ENCODE measurements at regions of chr10 and their contacts with region 1.

Region 1: DNA sequence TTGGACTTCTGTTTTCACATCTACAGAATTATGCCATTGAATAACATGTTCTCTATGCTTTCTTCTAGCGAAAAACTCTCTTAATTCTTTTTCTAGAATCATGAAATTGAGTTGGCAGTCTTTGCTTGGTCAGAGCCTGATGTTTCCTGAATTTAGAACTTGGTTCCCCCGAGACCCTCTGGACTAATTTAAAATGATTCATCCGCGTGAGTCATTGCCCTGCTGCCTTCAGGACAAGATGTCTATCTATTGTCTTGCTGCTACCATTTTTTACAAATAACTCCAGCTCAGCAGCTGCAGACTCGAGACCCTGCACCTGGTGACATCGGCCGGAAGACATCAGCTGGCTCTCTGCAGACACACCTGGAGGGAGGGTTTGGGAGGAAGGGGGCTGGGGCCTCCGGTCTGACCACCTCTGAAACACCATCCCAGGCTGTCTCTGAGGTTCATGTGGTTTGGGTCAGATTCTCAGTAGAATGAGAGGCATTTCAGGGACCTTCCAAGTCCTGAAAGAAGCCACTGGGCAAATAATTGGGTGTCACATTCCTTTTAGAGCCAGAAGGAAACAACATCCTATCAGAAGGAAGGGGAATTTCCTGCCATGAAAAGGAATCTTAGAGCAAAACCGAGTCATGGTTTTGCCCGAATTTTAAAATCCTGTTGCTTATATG is 20.9 kb upstream of the KLF6 start:
- DNase-seq: peak in 3 of 9 donors; percentile 13 to 53 (median 31)
- ATAC-seq: no peak
- H3K4me3 ChIP-seq: peak overlapping the region; percentile 38
- H3K4me3 Mint-ChIP-seq: peak overlapping the region; percentile 14 to 86 (median 70)
- H3K27ac ChIP-seq: peak overlapping the region; percentile 82
- H3K27ac Mint-ChIP-seq: peak overlapping the region in 3 of 9 donors; percentile 97 to 99 (median 99)
- H3K4me1 ChIP-seq: peaks cover 70 to 83% of the 10 kb centered on the region in 2 donors
- H3K4me1 Mint-ChIP-seq: peaks cover 43 to 81% (median 74%) of the 10 kb centered on the region in 7 donors
- H3K27me3 ChIP-seq: no peaks in the 10 kb centered on the region
- H3K27me3 Mint-ChIP-seq: no peaks in the 10 kb centered on the region

Region 2: DNA sequence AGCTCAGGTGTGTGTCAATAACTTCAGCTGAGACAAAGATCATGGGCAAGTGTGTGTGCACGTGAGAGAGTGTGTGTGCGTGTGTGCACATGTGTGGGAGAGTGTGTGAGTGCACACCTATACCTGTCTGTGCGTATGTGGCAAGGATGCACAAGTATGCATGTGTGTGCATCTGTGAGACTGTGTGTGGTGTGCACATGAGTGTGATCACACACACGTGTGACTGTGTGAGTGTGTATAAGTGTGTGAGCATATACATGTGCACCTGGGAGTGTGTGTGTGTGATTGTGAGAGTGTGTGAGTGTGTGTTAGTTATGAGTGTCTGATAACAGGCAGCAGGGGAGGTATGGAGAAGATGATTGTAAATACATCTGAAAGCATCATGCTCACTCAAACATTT is 1395.9 kb before region 1 on chr10:
- CTCF ChIA-PET with region 1: no interaction called
- POLR2A ChIA-PET with region 1: no interaction called
- intact Hi-C with region 1: no loop called
- DNase-seq: no peak
- ATAC-seq: no peak
- H3K4me3 ChIP-seq: no peak overlapping the region
- H3K4me3 Mint-ChIP-seq: no peak overlapping the region
- H3K27ac ChIP-seq: no peak overlapping the region
- H3K27ac Mint-ChIP-seq: no peak overlapping the region
- H3K4me1 ChIP-seq: no peaks in the 10 kb centered on the region
- H3K4me1 Mint-ChIP-seq: no peaks in the 10 kb centered on the region
- H3K27me3 ChIP-seq: no peaks in the 10 kb centered on the region
- H3K27me3 Mint-ChIP-seq: peaks cover 0 to 18% (median 0%) of the 10 kb centered on the region in 5 donors

Region 3: GRCh38 chr10:3452173-3452626 is 353.7 kb before region 1 on chr10:
- CTCF ChIA-PET with region 1: no interaction called
- POLR2A ChIA-PET with region 1: no interaction called
- intact Hi-C with region 1: loop called in 1 of 2 experiments (anchors 1 kb)
- DNase-seq: peak in 6 of 9 donors; percentile 18 to 56 (median 24)
- ATAC-seq: no peak
- H3K4me3 ChIP-seq: no peak overlapping the region
- H3K4me3 Mint-ChIP-seq: peak overlapping the region in 1 of 10 donors; percentile 57
- H3K27ac ChIP-seq: peak overlapping the region; percentile 51
- H3K27ac Mint-ChIP-seq: peak overlapping the region in 8 of 9 donors; percentile 16 to 88 (median 78)
- H3K4me1 ChIP-seq: peaks cover 0 to 38% of the 10 kb centered on the region in 2 donors
- H3K4me1 Mint-ChIP-seq: peaks cover 7 to 48% (median 36%) of the 10 kb centered on the region in 7 donors
- H3K27me3 ChIP-seq: peaks cover 0 to 6% of the 10 kb centered on the region in 2 donors
- H3K27me3 Mint-ChIP-seq: peaks cover 0 to 32% (median 0%) of the 10 kb centered on the region in 5 donors

Region 4: DNA sequence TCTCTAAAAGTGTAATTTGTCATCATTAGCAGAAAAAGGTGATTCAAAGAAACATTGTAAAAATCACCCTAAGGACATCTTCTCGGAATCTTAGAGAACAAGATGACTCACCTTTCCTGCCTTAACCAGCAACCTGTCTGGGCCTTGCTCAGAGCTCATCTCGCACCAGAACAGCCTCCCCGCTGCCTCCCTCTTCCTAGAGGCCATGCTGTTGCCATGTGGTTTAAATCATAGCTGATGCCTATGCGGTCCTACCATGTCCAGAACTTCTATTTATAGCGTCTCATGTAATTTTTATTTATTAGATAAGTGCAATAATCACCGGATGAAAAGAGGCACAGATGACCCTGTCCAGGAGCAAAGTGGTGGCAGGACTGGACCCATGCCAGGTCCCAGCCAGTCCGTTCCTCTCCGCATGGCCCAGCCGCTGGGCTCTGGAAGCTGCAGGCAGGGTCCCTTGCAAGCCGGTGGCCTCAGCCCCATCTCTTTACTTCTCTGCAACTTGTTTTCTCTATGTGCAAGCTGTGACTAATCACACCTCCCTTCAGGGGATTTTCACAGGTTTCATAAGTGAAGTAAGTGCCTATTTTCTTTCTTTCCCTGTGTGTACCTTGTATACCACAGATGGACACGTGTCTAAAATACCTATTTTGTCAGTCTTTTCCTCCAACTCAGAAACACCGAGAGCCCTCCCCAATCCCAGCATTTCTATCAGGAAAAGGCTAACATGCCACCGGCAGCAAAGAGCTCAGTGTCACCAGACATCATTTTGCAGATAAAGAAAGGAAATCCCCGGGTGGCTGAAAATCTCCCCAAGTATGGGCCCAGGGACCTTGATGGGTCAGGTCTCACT is 48.1 kb before region 1 on chr10:
- CTCF ChIA-PET with region 1: no interaction called
- POLR2A ChIA-PET with region 1: no interaction called
- intact Hi-C with region 1: loop called in 1 of 2 experiments (anchors 1 kb)
- DNase-seq: peak in 1 of 9 donors; percentile 62
- ATAC-seq: peak; percentile 80
- H3K4me3 ChIP-seq: no peak overlapping the region
- H3K4me3 Mint-ChIP-seq: peak overlapping the region in 2 of 10 donors; percentile 56 to 82
- H3K27ac ChIP-seq: no peak overlapping the region
- H3K27ac Mint-ChIP-seq: peak overlapping the region in 4 of 9 donors; percentile 65 to 99 (median 83)
- H3K4me1 ChIP-seq: peaks cover 0 to 56% of the 10 kb centered on the region in 2 donors
- H3K4me1 Mint-ChIP-seq: peaks cover 5 to 79% (median 24%) of the 10 kb centered on the region in 7 donors
- H3K27me3 ChIP-seq: no peaks in the 10 kb centered on the region
- H3K27me3 Mint-ChIP-seq: no peaks in the 10 kb centered on the region

Region 5: DNA sequence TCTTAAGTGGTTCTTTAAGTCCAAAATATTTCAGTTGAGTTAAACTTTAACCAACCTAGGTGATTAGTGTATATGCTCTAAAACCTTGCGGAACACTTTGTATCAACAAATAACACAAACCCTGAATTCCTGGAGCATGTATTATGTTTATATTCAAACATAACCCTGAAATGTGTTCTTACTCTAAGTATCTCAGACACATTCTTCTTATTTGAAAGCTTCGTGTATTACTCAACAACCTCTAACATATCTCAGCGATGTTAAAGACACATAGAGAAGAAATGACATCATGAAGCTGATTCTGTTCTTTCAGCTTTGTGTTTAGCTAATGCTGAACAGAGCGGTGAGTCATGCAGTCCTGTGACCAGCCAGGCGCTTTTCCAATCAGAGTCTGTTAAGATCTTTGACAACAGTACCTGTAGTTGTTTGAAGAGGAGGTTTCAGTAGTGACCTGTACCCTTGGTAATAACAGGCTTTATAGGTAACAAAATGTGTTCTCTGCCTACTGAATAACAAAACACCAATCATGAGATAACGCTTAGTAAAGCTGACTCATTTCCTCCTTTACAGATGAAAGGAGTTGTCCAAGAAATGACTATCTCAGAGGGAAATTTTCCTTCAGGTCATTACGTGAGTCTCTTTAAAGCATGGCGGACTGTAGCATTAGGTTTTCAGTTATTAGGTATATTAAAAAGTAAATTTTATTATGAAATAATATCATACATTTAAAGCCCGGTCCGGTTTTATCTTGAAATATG is 46.4 kb after region 1 on chr10:
- CTCF ChIA-PET with region 1: no interaction called
- POLR2A ChIA-PET with region 1: no interaction called
- intact Hi-C with region 1: loop called in 1 of 2 experiments (anchors 1 kb)
- DNase-seq: peak in 2 of 9 donors; percentile 28 to 55
- ATAC-seq: peak; percentile 87
- H3K4me3 ChIP-seq: no peak overlapping the region
- H3K4me3 Mint-ChIP-seq: peak overlapping the region in 1 of 10 donors; percentile 55
- H3K27ac ChIP-seq: no peak overlapping the region
- H3K27ac Mint-ChIP-seq: peak overlapping the region in 3 of 9 donors; percentile 70 to 92 (median 80)
- H3K4me1 ChIP-seq: peaks cover 5 to 12% of the 10 kb centered on the region in 2 donors
- H3K4me1 Mint-ChIP-seq: peaks cover 0 to 35% (median 8%) of the 10 kb centered on the region in 7 donors
- H3K27me3 ChIP-seq: no peaks in the 10 kb centered on the region
- H3K27me3 Mint-ChIP-seq: no peaks in the 10 kb centered on the region

Region 6: DNA sequence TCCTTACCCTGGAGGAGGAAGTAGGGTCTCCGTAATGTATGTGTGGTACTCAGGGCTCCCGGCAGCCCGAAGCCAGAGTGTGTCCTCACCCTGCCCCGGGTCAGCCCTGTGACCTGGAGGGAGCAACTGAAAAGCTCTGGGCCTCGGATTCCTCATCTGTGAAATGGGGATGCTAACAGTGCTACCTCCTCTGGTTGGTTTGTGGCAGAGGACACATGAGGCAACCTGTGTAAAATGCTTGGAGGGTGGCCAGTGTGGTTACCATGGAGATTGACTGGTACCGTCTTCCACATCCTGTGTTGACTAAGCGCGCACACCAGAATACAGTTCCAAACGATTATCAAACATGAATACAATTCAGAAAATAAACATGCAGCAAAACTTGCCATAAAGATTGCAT is 142.9 kb after region 1 on chr10:
- CTCF ChIA-PET with region 1: no interaction called
- POLR2A ChIA-PET with region 1: interaction called, 3 read pairs
- intact Hi-C with region 1: loop called (anchors 1 kb)
- DNase-seq: peak; percentile 21 to 79 (median 61)
- ATAC-seq: peak; percentile 94
- H3K4me3 ChIP-seq: no peak overlapping the region
- H3K4me3 Mint-ChIP-seq: peak overlapping the region in 9 of 10 donors; percentile 16 to 67 (median 47)
- H3K27ac ChIP-seq: no peak overlapping the region
- H3K27ac Mint-ChIP-seq: peak overlapping the region; percentile 32 to 97 (median 78)
- H3K4me1 ChIP-seq: peaks cover 20 to 59% of the 10 kb centered on the region in 2 donors
- H3K4me1 Mint-ChIP-seq: peaks cover 14 to 60% (median 36%) of the 10 kb centered on the region in 7 donors
- H3K27me3 ChIP-seq: no peaks in the 10 kb centered on the region
- H3K27me3 Mint-ChIP-seq: no peaks in the 10 kb centered on the region

Region 7: DNA sequence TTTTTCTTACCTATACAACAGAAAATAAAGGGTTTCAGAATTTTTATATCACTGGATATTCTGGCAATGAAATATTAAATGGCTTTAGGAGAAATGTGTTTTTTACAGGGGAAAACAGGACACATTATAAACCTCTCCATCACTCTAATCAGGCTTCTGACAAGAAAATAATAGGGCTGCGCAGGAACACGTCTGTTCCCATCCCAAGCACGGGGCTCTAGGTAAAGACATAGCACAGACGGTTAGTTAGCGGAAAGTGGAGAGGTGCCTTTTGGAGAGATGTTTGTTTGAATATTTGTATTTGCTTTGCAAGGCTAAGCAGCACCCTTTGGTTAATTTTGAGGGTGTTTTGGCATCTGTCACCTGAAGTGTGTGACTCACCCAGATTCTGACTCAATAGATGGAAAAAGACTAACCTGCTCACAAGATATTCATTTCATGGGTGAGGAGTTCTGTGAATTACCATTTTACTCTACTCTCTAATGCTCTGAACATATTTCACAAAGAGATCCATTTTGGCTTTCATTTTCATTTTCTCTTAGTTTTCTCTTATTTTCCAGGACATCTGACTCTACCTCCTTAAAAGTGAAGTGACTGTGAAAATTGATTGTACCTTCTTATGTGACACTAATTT is 845.6 kb after region 1 on chr10:
- CTCF ChIA-PET with region 1: no interaction called
- POLR2A ChIA-PET with region 1: no interaction called
- intact Hi-C with region 1: loop called in 1 of 2 experiments (anchors 2 kb)
- DNase-seq: peak in 1 of 9 donors; percentile 23
- ATAC-seq: no peak
- H3K4me3 ChIP-seq: no peak overlapping the region
- H3K4me3 Mint-ChIP-seq: peak overlapping the region in 1 of 10 donors; percentile 35
- H3K27ac ChIP-seq: no peak overlapping the region
- H3K27ac Mint-ChIP-seq: peak overlapping the region in 1 of 9 donors; percentile 76
- H3K4me1 ChIP-seq: no peaks in the 10 kb centered on the region
- H3K4me1 Mint-ChIP-seq: peaks cover 0 to 29% (median 0%) of the 10 kb centered on the region in 7 donors
- H3K27me3 ChIP-seq: no peaks in the 10 kb centered on the region
- H3K27me3 Mint-ChIP-seq: peaks cover 0 to 3% (median 2%) of the 10 kb centered on the region in 5 donors

Measured in naive thymus-derived CD4-positive, alpha-beta T cell (primary cell).